RWPE1 (cell line): ENCODE measurements at regions of chr7 and their contacts with region 1.

Region 1: DNA sequence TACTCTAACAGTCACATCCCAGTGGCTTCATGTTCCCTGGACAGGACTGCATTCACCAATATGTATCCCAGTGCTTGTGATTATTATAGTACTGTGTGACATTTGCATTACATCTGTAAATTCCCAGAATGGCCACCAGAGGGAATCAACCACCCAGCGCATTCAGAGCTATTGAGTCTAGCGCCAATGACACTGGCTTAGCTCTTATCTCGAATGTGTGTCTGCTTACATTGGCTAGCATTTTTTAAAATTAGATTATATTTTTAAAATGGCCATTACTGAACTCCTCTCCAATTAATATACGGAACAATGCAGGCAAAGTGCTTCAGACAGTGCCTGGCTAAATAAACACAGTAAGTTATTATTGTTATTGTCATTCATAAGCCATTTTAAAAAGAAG is 36.3 kb downstream of the TRIL start:
- DNase-seq: peak; percentile 64
- H3K27ac ChIP-seq: no peak overlapping the region
- CTCF ChIP-seq: peak; percentile 86

Region 2: DNA sequence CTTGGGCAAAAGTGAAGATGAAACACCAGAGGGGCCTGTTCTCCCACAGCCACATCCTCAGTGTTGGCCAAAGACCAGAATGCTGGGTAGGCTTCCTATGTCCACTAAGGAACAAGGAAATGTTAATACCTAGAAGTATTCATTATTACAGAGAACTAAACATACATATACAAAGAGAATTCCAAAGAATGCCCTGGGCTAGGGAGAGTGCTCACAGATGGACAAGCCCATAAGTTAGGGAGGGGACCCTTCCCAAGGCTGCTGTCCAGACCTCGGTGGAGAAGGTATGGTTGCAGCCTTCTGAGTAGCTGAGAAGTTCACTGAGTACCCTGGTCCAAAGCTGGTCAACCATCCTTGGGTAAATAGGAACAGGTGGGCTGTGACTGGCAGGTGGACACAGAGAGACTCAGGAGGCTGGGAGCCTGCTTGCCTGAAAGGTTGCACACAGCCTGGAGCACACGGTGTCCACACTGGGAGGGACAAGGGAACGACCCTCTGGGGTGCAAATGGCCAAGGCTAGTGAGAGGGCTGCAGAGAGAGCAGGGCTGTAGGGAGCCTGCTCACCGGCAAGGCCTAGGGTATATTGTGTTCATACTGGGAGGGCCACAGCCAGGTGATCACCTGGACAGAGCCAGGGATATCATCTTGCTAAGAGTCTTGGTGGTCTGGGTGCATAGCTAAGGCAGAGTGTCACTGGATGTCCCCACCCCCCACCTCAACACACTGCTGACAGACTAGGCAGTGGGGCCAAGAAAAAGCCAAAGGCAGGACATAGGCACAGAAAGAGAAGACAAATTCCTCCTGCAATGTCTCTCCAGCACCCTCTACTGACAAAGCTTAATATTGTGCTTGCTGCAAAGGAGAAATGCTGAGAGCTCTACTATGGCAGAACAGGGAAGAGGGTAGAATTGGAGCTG is 184.2 kb after region 1 on chr7:
- CTCF ChIA-PET with region 1: interaction called, 33 read pairs
- POLR2A ChIA-PET with region 1: interaction called, 4 read pairs
- DNase-seq: no peak
- H3K27ac ChIP-seq: no peak overlapping the region
- CTCF ChIP-seq: peak; percentile 95

Region 3: GRCh38 chr7:29140873-29141468 is 219.1 kb after region 1 on chr7:
- CTCF ChIA-PET with region 1: no interaction called
- POLR2A ChIA-PET with region 1: no interaction called
- DNase-seq: no peak
- H3K27ac ChIP-seq: no peak overlapping the region
- CTCF ChIP-seq: no peak

Region 4: DNA sequence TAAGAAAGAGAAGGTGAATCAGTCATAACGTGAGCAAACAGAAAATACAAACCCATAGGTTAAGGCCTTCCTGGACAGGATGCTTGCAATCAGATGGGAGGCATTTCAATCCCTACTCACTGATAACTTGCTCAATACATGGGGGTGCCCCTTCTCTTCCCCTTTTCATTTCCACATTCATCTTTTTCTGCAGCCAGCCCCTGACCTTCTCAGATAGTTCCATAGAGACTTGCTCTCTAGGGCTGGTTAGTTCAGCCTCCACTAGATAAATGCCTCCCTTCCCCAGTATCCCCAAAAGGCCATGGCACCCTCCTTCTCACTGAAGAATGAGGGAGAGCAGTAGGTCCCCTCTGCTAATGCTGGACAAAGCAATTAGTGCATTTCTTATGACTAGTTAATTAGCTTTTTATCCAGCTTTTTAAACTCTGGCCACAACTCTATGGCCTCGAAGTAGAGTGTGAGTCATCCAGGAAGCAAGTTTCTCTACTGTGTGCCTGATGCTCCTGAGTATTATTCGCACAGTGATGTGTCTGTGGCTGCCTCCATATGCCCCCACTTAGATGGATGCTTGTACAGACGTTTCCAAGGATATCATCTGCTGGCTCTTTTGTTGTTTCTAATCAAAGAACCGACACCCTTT is 285.5 kb after region 1 on chr7:
- CTCF ChIA-PET with region 1: no interaction called
- POLR2A ChIA-PET with region 1: no interaction called
- DNase-seq: no peak
- H3K27ac ChIP-seq: no peak overlapping the region
- CTCF ChIP-seq: no peak

Region 5: DNA sequence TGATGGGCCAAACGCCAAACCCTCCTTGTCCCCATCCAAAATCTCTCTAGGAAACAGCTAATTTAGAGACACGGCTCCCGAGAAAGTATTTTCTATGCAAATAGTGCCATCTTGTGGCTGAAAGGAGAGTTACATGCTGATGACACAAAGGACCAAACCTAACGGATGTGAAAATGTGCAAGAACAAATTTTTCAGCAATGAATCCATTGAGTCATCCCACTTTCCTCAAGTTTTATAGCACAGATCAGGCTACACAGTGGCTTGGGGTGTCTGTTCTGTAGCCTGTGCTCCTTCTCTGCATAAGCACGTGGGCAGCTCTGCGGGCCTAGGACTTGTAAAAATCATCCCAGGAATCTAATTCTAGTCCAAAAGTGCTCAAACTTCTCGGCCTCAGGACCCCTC is 487.0 kb after region 1 on chr7:
- CTCF ChIA-PET with region 1: interaction called, 46 read pairs
- POLR2A ChIA-PET with region 1: no interaction called
- DNase-seq: peak; percentile 79
- H3K27ac ChIP-seq: no peak overlapping the region
- CTCF ChIP-seq: peak; percentile 77